ENCODE measurements at regions of chr11 and their contacts with region 1.

Region 1: DNA sequence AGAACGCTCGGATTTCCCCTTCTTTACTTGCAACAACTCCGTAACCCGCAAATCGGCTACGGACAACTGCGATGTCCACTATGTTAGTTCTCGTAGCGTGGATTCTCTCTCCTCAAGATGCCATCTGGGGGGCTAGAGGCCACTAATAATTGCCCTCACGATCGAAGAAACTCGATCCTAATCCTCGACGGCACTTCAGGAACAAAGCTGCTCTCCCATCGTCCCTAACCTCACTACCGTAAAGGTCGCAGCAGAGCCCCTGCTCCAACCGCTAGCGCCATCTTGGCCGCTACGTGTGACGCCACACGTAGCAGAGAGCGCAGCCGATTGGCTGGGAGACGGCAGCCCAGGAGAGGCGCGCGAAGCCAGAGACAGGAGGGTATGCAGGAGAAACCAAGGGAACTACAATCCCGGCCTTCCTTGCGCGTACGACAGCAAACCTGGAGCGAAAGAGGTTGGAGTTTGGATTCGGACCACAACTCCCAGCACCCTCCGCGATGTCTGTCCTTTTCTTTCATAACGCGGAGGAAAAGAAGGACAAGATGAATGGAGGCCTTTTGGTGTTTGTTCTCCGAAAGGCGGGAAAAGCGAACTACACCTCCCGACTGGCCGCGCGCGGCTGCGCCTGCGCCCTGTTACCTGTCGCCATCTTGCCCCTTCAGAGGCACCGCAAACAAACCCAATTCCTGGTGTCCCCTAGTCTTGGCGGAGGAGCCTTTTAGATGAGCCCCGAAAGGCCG is at the start of gene EMSY:
- DNase-seq: peak; percentile 97 to 98
- ATAC-seq: peak; percentile 99
- H3K4me3 ChIP-seq: peak within 1 kb of the TSS; percentile 92 to 93
- H3K27ac ChIP-seq: peak within 1 kb of the TSS; percentile 44 to 76
- H3K4me1 ChIP-seq: no peaks in the 10 kb centered on the region
- H3K27me3 ChIP-seq: no peaks in the 10 kb centered on the region
- total RNA-seq, gene EMSY: 25.1 to 35.0 TPM

Region 2: GRCh38 chr11:76235233-76236091 is 209.1 kb before region 1 on chr11:
- intact Hi-C with region 1: loop called in 1 of 2 experiments (anchors 1 kb)
- DNase-seq: peak; percentile 93 to 95
- ATAC-seq: peak; percentile 92
- H3K4me3 ChIP-seq: peak overlapping the region; percentile 45 to 68
- H3K27ac ChIP-seq: peak overlapping the region in 1 of 2 donors; percentile 55
- H3K4me1 ChIP-seq: no peaks in the 10 kb centered on the region
- H3K27me3 ChIP-seq: no peaks in the 10 kb centered on the region

Region 3: GRCh38 chr11:76380967-76381719 is 63.4 kb before region 1 on chr11 and contains the starts of genes GVQW3 and THAP12:
- intact Hi-C with region 1: loop called (anchors 2 to 5 kb)
- DNase-seq: peak; percentile 98 to 99
- ATAC-seq: peak; percentile 99
- H3K4me3 ChIP-seq: peak within 1 kb of the TSS; percentile 71 to 90
- H3K27ac ChIP-seq: no peak within 1 kb of the TSS
- H3K4me1 ChIP-seq: no peaks in the 10 kb centered on the region
- H3K27me3 ChIP-seq: no peaks in the 10 kb centered on the region
- total RNA-seq, gene GVQW3: 1.9 to 3.7 TPM
- total RNA-seq, gene THAP12: 36.7 to 41.0 TPM

Region 4: DNA sequence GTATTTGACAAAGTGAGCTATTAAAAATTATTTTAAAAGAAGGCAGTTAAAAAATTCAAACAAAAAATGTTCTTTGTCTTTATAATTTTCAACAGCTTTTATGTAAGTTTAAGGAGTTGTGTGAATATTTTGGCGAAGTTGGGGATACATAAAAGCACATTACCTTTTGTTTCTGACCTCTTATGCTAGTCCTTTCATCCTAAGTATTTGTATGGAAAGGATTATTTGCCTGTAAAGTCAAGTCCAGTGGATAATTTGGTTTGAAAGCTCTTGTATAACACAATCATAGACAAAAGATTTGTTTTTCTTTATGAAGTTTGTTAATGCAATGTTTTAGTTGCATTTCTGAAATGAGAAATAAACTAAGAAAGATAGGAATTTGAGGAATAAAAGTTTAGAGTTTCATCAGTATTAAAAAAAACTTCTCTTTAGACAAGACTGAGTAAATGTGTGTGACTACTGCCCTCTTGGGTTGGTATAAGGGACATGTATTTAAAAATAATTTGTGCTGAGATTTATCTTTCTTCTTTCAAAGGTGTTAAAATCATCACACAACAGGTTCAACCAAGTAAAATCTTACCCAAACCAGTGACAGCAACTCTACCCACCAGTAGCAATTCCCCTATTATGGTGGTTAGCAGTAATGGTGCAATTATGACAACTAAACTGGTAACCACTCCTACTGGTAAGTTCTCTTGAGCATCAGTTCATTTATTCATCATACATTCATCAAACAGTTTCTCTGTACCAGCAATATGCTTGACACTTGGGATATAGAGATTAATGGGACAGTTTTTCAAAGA is 68.5 kb after region 1 on chr11:
- intact Hi-C with region 1: loop called in 1 of 2 experiments (anchors 10 kb)
- DNase-seq: no peak
- ATAC-seq: no peak
- H3K4me3 ChIP-seq: no peak overlapping the region
- H3K27ac ChIP-seq: no peak overlapping the region
- H3K4me1 ChIP-seq: peaks cover 0 to 2% of the 10 kb centered on the region in 2 donors
- H3K27me3 ChIP-seq: no peaks in the 10 kb centered on the region

Measured in aorta (tissue), 5 donors.